ENCODE measurements at regions of chr10 and their contacts with region 1.

Region 1: GRCh38 chr10:102352066-102352715 is 43.3 kb upstream of the NFKB2 start:
- DNase-seq: peak; percentile 58

Region 2: GRCh38 chr10:102225646-102226541 is 126.3 kb before region 1 on chr10 and contains the start of gene ELOVL3:
- in situ Hi-C with region 1: loop called (anchors 10 kb)
- DNase-seq: peak; percentile 76
- total RNA-seq, gene ELOVL3: 0.12 and 0.78 TPM in 2 replicates